IMR-90 (cell line): ENCODE measurements at regions of chrX and their contacts with region 1.

Region 1: GRCh38 chrX:74343343-74344279 is 39.6 kb downstream of the ZCCHC13 start:
- DNase-seq: peak; percentile 97
- ATAC-seq: peak; percentile 99
- H3K4me3 ChIP-seq: no peak overlapping the region
- H3K27ac ChIP-seq: no peak overlapping the region
- H3K4me1 ChIP-seq: 0 out of 2 replicates have a peak, but pooled peaks cover 2% of the 10 kb centered on the region
- H3K27me3 ChIP-seq: no peaks in the 10 kb centered on the region
- CTCF ChIP-seq: peak; percentile 67
- POLR2A ChIP-seq: no peak
- RAD21 ChIP-seq: peak; percentile 70

Region 2: DNA sequence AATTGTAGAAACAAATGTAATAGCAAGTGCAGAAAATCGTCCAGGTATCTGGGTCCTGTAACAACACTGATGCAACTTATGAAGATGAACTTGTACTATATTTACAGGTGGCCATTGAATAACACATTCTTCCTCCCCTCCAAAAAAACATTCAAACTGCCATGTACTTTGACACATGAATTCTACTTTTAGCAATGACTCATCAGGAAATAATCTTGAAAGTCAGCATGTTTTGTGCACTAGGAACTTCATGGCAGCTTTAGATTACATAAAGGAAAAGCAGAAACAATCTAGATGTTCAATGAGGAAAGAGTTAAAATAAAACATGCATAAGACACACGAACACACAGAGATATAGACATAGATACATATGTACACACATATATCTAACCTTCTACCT is 1266.8 kb before region 1 on chrX:
- CTCF ChIA-PET with region 1: no interaction called
- POLR2A ChIA-PET with region 1: no interaction called
- dilution Hi-C with region 1: no loop called
- in situ Hi-C with region 1: no loop called
- intact Hi-C with region 1: loop called (anchors 10 kb)
- DNase-seq: no peak
- ATAC-seq: no peak
- H3K4me3 ChIP-seq: no peak overlapping the region
- H3K27ac ChIP-seq: no peak overlapping the region
- H3K4me1 ChIP-seq: no peaks in the 10 kb centered on the region
- H3K27me3 ChIP-seq: no peaks in the 10 kb centered on the region
- CTCF ChIP-seq: no peak
- POLR2A ChIP-seq: no peak
- RAD21 ChIP-seq: no peak

Region 3: DNA sequence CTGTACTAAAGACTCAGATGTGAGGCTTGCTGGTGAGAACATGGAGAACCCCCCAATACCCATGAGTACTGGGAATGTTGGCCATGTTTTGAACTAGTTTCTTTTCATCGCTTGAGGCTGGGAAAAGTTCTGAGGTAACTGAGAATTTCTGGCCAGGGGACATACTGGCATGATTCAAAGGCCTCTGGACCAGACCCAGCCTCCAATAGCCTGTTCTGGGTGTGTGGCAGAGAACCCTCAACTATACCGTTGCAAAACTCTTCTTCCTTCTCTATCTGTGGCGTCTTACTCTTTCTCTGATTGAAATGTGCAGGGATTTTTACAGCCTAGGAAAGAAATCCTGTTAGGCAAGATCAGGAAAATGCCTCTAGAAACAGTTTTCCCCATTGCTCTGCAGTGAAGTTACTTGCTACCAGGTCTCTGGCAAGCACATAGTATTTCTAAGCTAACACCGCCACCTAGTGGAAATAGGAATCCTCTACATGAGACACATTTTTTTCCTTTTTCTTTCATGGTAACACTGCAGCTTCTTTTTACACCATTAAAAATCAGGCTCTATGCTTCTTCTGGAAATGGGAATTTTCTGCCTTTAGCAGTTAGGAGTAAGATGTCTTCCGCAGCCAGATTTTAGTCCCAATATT is 210.3 kb before region 1 on chrX:
- CTCF ChIA-PET with region 1: no interaction called
- POLR2A ChIA-PET with region 1: no interaction called
- dilution Hi-C with region 1: no loop called
- in situ Hi-C with region 1: no loop called
- intact Hi-C with region 1: loop called (anchors 1 kb)
- DNase-seq: peak; percentile 80
- ATAC-seq: peak; percentile 99
- H3K4me3 ChIP-seq: no peak overlapping the region
- H3K27ac ChIP-seq: no peak overlapping the region
- H3K4me1 ChIP-seq: no peaks in the 10 kb centered on the region
- H3K27me3 ChIP-seq: peaks cover 2% of the 10 kb centered on the region; the same call in 1 of the 2 replicates
- CTCF ChIP-seq: peak; percentile 88
- POLR2A ChIP-seq: no peak
- RAD21 ChIP-seq: peak; percentile 89

Region 4: GRCh38 chrX:74324131-74324530 is 19.5 kb before region 1 on chrX:
- CTCF ChIA-PET with region 1: no interaction called
- POLR2A ChIA-PET with region 1: no interaction called
- dilution Hi-C with region 1: no loop called
- in situ Hi-C with region 1: no loop called
- intact Hi-C with region 1: no loop called
- DNase-seq: no peak
- ATAC-seq: no peak
- H3K4me3 ChIP-seq: no peak overlapping the region
- H3K27ac ChIP-seq: no peak overlapping the region
- H3K4me1 ChIP-seq: no peaks in the 10 kb centered on the region
- H3K27me3 ChIP-seq: peaks cover 29% of the 10 kb centered on the region
- CTCF ChIP-seq: no peak
- POLR2A ChIP-seq: no peak
- RAD21 ChIP-seq: no peak

Region 5: GRCh38 chrX:74382613-74383012 is 39.0 kb after region 1 on chrX:
- CTCF ChIA-PET with region 1: no interaction called
- POLR2A ChIA-PET with region 1: no interaction called
- dilution Hi-C with region 1: no loop called
- in situ Hi-C with region 1: no loop called
- intact Hi-C with region 1: loop called (anchors 2 kb)
- DNase-seq: peak; percentile 66
- ATAC-seq: peak; percentile 89
- H3K4me3 ChIP-seq: no peak overlapping the region
- H3K27ac ChIP-seq: no peak overlapping the region
- H3K4me1 ChIP-seq: no peaks in the 10 kb centered on the region
- H3K27me3 ChIP-seq: peaks cover 3% of the 10 kb centered on the region
- CTCF ChIP-seq: peak; percentile 68
- POLR2A ChIP-seq: no peak
- RAD21 ChIP-seq: peak; percentile 59

Region 6: GRCh38 chrX:74550295-74550802 is 206.7 kb after region 1 on chrX:
- CTCF ChIA-PET with region 1: no interaction called
- POLR2A ChIA-PET with region 1: no interaction called
- dilution Hi-C with region 1: no loop called
- in situ Hi-C with region 1: no loop called
- intact Hi-C with region 1: loop called (anchors 1 kb)
- DNase-seq: peak; percentile 67
- ATAC-seq: peak; percentile 97
- H3K4me3 ChIP-seq: peak overlapping the region; percentile 38; the same call in 1 of the 2 replicates
- H3K27ac ChIP-seq: no peak overlapping the region
- H3K4me1 ChIP-seq: no peaks in the 10 kb centered on the region
- H3K27me3 ChIP-seq: no peaks in the 10 kb centered on the region; the same call in 1 of the 2 replicates
- CTCF ChIP-seq: peak; percentile 99
- POLR2A ChIP-seq: no peak
- RAD21 ChIP-seq: peak; percentile 95